ENCODE measurements at regions of chr10 and their contacts with region 1.

Region 1: GRCh38 chr10:114403541-114404161 is 651 bp downstream of the AFAP1L2 start:
- DNase-seq: peak; percentile 71
- H3K4me3 ChIP-seq: peak overlapping the region; percentile 83 to 88 (median 88)
- H3K27ac ChIP-seq: peak overlapping the region; percentile 79
- H3K4me1 ChIP-seq: peaks cover 51% of the 10 kb centered on the region
- H3K27me3 ChIP-seq: no peaks in the 10 kb centered on the region
- CTCF ChIP-seq: peak; percentile 27 to 59

Region 2: GRCh38 chr10:114223066-114223465 is 180.6 kb before region 1 on chr10:
- CTCF ChIA-PET with region 1: no interaction called
- dilution Hi-C with region 1: no loop called
- in situ Hi-C with region 1: no loop called
- intact Hi-C with region 1: no loop called
- DNase-seq: no peak
- H3K4me3 ChIP-seq: no peak overlapping the region
- H3K27ac ChIP-seq: no peak overlapping the region
- H3K4me1 ChIP-seq: no peaks in the 10 kb centered on the region
- H3K27me3 ChIP-seq: peaks cover 4% of the 10 kb centered on the region
- CTCF ChIP-seq: no peak

Region 3: DNA sequence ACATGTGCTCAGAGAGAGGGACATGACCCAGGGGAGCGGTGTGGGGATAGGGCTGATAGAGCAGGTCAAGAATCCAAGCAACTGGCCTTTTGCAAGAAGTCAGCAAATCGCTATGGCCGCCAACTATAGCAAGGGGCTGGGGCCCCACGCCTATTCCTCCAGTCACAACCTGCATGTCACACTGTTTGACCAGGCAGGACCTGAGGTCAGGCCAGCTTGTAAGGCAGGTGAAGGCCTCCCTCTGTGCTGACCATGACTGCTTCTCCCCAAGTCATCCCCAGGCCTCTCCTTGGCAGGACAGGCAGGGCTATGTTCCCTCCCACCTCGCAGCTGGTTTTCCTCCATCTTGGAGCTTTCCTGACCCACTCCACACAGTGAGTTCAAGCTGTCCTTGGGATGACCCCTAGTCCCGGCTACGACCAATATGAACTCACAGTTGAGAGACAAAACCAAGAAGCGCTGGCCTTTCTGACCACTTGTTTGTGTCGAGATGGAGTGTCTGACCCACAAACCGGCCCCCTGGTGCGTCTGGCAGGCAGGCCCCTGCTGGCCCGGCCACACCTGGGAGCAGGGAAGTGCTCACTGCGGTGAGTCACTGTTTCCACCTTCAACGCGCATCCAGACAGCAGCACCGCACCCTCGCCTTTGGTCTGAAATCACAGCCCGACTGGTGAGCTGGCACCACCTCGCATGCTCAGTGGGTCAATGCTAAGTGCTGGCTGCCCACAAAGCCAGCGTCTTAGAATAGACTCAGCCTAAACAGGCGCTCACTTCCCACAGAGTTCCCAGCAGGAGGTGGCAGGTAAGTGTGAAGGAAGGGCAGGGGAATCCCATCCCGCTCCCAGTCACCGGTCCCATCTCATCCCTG is 83.2 kb before region 1 on chr10:
- CTCF ChIA-PET with region 1: interaction called, 4 read pairs
- dilution Hi-C with region 1: no loop called
- in situ Hi-C with region 1: no loop called
- intact Hi-C with region 1: loop called (anchors 2 kb)
- DNase-seq: peak; percentile 100
- H3K4me3 ChIP-seq: peak overlapping the region in 1 of 3 experiments; percentile 11
- H3K27ac ChIP-seq: peak overlapping the region; percentile 86
- H3K4me1 ChIP-seq: peaks cover 30% of the 10 kb centered on the region
- H3K27me3 ChIP-seq: no peaks in the 10 kb centered on the region
- CTCF ChIP-seq: peak in 1 of 2 donors; percentile 1

Region 4: DNA sequence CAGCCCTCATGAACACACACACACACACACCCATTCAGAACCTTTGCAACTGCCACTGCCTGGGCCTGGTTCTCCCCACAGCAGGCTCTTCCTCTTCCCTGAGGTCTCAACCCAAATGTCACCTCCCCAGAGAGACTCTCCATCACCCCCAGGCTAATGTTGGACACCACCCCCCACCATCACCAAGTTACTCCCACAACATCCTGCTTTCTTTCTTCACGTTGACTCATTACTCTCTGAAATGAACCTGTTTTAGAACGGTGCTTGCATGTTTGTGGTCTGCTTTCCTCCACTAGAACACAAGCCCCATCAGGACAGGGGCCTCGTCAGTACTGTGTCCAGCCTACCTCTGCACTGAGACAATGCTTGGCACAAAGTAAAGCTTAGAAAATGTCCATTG is 15.4 kb before region 1 on chr10:
- CTCF ChIA-PET with region 1: no interaction called
- dilution Hi-C with region 1: no loop called
- in situ Hi-C with region 1: no loop called
- intact Hi-C with region 1: loop called (anchors 1 kb)
- DNase-seq: peak; percentile 87
- H3K4me3 ChIP-seq: no peak overlapping the region
- H3K27ac ChIP-seq: peak overlapping the region; percentile 25
- H3K4me1 ChIP-seq: peaks cover 58% of the 10 kb centered on the region
- H3K27me3 ChIP-seq: no peaks in the 10 kb centered on the region
- CTCF ChIP-seq: no peak

Region 5: GRCh38 chr10:114437456-114438292 is 34.0 kb after region 1 on chr10:
- CTCF ChIA-PET with region 1: interaction called, 9 read pairs
- dilution Hi-C with region 1: no loop called
- in situ Hi-C with region 1: no loop called
- intact Hi-C with region 1: loop called (anchors 2 kb)
- DNase-seq: peak; percentile 26
- H3K4me3 ChIP-seq: no peak overlapping the region
- H3K27ac ChIP-seq: no peak overlapping the region
- H3K4me1 ChIP-seq: no peaks in the 10 kb centered on the region
- H3K27me3 ChIP-seq: no peaks in the 10 kb centered on the region
- CTCF ChIP-seq: peak; percentile 49 to 61

Region 6: DNA sequence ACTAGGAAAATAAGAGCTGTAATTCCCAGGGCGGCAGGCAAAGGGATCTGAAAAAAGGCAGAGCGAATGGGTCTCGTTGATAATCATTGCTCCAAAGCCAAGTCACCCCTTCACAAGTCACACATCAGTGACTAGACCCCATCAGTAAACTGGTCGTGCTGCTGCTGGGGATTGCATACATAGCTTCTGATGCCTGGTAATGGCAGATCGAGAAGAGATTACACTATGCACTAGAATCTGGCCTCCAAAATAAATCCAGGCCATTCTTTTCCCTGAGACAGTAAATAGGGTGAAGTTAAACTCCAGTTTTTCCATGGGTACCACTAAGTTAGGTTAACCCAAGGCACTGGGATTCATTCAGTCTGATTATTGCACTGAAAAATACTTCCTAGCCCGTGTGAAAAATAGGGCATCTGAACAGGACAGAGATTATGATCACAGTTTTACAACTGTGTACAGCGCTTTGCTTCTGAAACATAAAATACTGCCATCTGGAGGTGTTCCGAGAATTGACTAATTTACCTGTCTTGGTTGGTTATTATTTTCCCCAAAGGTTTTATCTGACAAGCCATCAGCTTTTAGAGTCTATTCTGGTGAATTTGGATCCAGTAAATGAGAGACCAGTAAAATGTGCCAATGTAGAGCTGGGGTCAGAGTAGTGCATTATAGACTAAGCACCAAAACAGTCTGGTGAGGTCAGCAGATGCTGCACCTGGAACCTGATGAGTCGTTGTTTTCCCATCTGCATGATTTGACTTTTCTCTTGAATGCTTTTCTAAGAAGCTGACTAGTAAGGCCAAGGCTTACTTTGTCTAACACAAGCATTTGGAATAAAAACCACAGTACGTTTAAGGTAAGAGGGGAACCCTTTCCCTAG is 83.5 kb after region 1 on chr10:
- CTCF ChIA-PET with region 1: no interaction called
- dilution Hi-C with region 1: no loop called
- in situ Hi-C with region 1: no loop called
- intact Hi-C with region 1: no loop called
- DNase-seq: peak; percentile 84
- H3K4me3 ChIP-seq: no peak overlapping the region
- H3K27ac ChIP-seq: peak overlapping the region; percentile 90
- H3K4me1 ChIP-seq: peaks cover 39% of the 10 kb centered on the region
- H3K27me3 ChIP-seq: no peaks in the 10 kb centered on the region
- CTCF ChIP-seq: peak; percentile 9 to 24

Region 7: GRCh38 chr10:114526504-114527238 is 123.0 kb after region 1 on chr10:
- CTCF ChIA-PET with region 1: no interaction called
- dilution Hi-C with region 1: no loop called
- in situ Hi-C with region 1: no loop called
- intact Hi-C with region 1: no loop called
- DNase-seq: peak; percentile 91
- H3K4me3 ChIP-seq: peak overlapping the region; percentile 61 to 88 (median 64)
- H3K27ac ChIP-seq: peak overlapping the region; percentile 96
- H3K4me1 ChIP-seq: peaks cover 15% of the 10 kb centered on the region
- H3K27me3 ChIP-seq: no peaks in the 10 kb centered on the region
- CTCF ChIP-seq: no peak

Measured in mammary epithelial cell (primary cell).